Activated T-helper 1 cell treated with anti-CD3 and anti-CD28 coated beads, Interleukin-12 subunit alpha, Interleukin-12 subunit beta, Interleukin-2, Interleukin-4 antibody, amounts not matched to agents 30 ng/mL and 10 ng/mL and 1 ng/mL, durations not matched to agents 14 hours and 24 hours and 36 hours (primary cell): ENCODE measurements at regions of chr20 and their contacts with region 1.

Region 1: DNA sequence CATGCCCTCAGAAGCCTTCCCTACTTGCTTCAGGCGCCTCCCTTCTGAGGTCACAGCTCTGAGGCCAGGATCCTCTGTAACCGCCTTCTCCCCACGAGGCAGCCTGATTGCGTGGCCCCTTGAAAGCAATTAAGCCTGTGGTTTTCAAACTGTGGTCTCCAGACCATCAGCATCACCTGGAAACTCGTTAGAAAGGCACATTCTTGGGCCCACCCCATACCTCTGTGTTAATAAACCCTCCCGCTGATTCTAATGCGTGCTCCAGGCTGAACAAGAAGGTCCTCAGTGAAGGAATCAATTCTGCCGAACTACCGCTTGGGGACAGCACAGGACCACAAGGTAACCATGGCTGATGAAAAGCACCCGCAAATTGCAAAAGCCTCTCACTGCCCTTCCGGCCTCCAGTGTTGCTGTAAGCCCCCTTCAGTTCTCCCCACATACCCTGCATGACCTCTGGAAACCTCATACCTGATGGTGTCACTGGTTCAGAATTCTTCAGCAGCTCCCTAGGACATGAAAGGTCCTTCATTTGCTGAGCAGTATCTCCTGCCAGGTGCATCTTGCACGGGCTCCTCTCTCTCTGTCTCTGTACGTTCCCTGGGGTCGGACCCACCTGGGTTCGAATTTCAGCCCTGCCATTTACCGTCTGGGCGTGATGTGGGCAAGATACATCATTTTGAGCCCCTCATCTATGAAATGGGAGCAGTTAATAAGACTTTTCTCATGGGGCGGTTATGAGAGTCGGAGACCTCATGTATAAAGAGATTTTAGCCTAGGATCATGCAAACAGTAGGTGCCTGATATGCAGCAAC is 93.3 kb upstream of the RNF24 start:
- DNase-seq: peak; percentile 62
- H3K4me3 Mint-ChIP-seq: no peak overlapping the region
- H3K27ac Mint-ChIP-seq: peak overlapping the region; percentile 19
- H3K4me1 Mint-ChIP-seq: peaks cover 39% of the 10 kb centered on the region
- H3K27me3 Mint-ChIP-seq: no peaks in the 10 kb centered on the region

Region 2: DNA sequence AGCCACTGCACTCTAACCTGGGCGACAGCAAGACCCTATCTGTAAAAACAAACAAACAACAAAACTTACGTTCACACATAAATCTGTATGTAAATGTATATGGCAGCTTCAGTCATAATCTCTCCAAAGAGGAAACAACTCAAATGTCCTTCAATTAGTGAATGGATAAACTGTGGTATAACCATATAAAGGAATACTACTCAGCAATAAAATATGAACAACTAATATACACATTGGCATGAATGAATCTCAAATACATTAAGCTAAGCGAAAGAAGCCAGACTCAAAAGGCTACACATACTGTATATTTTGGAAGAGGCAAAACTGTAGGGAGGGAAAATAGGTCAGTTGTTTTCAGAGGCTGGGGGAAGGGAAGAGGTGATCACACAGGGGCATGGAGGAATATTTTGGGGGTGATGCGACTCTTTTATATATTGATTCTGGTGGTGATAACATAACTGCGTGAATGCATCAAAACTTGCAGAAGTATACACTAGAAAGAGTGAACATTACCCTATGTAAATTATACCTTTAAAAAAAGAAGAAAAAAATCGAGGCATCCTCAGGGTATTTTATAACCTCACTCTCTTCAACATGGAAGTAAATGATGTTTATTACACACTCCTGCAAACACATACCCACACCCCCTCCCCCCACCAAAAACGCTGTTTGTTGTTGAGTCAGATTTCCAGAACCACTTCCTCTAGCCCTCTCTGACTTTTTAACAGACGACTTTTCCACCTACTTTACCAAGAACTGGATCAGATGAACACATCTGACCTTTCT is 21.9 kb after region 1 on chr20:
- intact Hi-C with region 1: loop called (anchors 1 kb)
- DNase-seq: peak; percentile 65
- H3K4me3 Mint-ChIP-seq: peak overlapping the region; percentile 60
- H3K27ac Mint-ChIP-seq: peak overlapping the region; percentile 91
- H3K4me1 Mint-ChIP-seq: peaks cover 57% of the 10 kb centered on the region
- H3K27me3 Mint-ChIP-seq: peaks cover 4% of the 10 kb centered on the region

Region 3: DNA sequence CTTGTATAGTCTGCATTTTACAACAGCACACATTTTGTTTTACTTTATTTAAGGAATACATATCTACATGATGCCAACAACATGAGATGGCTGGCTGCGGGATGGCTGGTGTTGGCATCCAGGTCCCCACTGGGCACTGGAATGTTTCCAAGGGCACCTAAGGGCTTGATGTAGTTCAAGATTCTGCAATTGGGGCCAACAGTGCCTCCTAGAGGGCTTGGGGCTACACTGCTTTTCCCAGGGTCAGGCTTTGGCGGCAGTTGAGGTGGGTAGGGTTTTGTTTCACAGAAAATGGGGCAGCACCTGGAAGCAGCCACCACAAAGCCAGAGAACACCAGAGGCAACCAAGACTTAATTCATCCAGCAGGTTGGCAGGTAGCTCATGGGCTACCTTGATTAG is 410.8 kb after region 1 on chr20:
- intact Hi-C with region 1: loop called (anchors 5 kb)
- DNase-seq: peak; percentile 3
- H3K4me3 Mint-ChIP-seq: no peak overlapping the region
- H3K27ac Mint-ChIP-seq: no peak overlapping the region
- H3K4me1 Mint-ChIP-seq: no peaks in the 10 kb centered on the region
- H3K27me3 Mint-ChIP-seq: peaks cover 8% of the 10 kb centered on the region

Region 4: GRCh38 chr20:4592316-4593148 is 483.8 kb after region 1 on chr20:
- intact Hi-C with region 1: loop called (anchors 1 kb)
- DNase-seq: peak; percentile 39
- H3K4me3 Mint-ChIP-seq: peak overlapping the region; percentile 5
- H3K27ac Mint-ChIP-seq: no peak overlapping the region
- H3K4me1 Mint-ChIP-seq: no peaks in the 10 kb centered on the region
- H3K27me3 Mint-ChIP-seq: peaks cover 32% of the 10 kb centered on the region

Region 5: GRCh38 chr20:4720041-4720976 is 611.6 kb after region 1 on chr20:
- intact Hi-C with region 1: loop called (anchors 5 kb)
- DNase-seq: peak; percentile 58
- H3K4me3 Mint-ChIP-seq: no peak overlapping the region
- H3K27ac Mint-ChIP-seq: no peak overlapping the region
- H3K4me1 Mint-ChIP-seq: peaks cover 9% of the 10 kb centered on the region
- H3K27me3 Mint-ChIP-seq: peaks cover 13% of the 10 kb centered on the region